Dendritic cell treated with granulocyte-macrophage colony-stimulating factor and Interleukin-4, amounts not matched to agents 40 ng/mL and 50 ng/mL, for 4 days (primary cell): ENCODE measurements at regions of chr3 and their contacts with region 1.

Region 1: GRCh38 chr3:119145500-119146191 is at the start of gene TEX55:
- H3K4me3 Mint-ChIP-seq: no peak within 1 kb of the TSS
- H3K27ac Mint-ChIP-seq: no peak within 1 kb of the TSS
- H3K4me1 Mint-ChIP-seq: no peaks in the 10 kb centered on the region
- H3K27me3 Mint-ChIP-seq: no peaks in the 10 kb centered on the region

Region 2: GRCh38 chr3:119240591-119241434 is 95.2 kb after region 1 on chr3 and contains the start of gene B4GALT4:
- intact Hi-C with region 1: loop called (anchors 5 kb)
- H3K4me3 Mint-ChIP-seq: peak within 1 kb of the TSS; percentile 83
- H3K27ac Mint-ChIP-seq: peak within 1 kb of the TSS; percentile 87
- H3K4me1 Mint-ChIP-seq: peaks cover 26% of the 10 kb centered on the region
- H3K27me3 Mint-ChIP-seq: no peaks in the 10 kb centered on the region